Mammary epithelial cell (primary cell): ENCODE measurements at regions of chr12 and their contacts with region 1.

Region 1: GRCh38 chr12:6392504-6393077 is 8.6 kb downstream of the LTBR start:
- DNase-seq: no peak
- H3K4me3 ChIP-seq: no peak overlapping the region
- H3K27ac ChIP-seq: no peak overlapping the region
- H3K4me1 ChIP-seq: no peaks in the 10 kb centered on the region
- H3K27me3 ChIP-seq: no peaks in the 10 kb centered on the region
- CTCF ChIP-seq: no peak

Region 2: DNA sequence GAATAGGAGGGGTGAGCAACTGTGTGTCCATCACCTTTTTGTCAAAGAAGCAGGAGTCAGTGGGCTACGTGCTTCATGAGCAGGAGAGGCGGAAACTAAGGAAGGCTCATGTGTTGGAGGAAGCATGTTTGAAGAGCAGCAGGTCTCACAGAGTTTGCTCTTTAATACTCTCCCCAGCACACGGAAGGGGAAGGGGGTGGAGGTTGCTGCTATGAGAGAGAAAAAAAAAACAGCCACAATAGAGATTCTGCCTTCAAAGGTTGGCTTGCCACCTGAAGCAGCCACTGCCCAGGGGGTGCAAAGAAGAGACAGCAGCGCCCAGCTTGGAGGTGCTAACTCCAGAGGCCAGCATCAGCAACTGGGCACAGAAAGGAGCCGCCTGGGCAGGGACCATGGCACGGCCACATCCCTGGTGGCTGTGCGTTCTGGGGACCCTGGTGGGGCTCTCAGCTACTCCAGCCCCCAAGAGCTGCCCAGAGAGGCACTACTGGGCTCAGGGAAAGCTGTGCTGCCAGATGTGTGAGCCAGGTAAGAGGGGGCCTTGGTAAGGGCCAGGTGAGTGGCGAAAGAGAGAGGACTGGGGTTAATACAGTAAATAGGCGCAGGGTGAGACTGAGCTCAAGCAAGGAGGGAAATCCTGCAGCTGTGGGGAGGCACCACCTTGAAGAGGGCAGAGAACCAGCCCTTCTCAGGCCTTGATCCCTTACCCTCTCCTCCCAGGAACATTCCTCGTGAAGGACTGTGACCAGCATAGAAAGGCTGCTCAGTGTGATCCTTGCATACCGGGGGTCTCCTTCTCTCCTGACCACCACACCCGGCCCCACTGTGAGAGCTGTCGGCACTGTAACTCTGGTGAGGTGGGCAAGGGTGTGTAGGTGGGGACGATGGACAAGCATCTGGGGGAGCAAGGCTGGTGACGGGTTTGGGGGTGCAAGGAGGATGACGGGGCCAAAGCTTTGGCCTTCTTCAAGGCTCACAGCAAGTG is 52.4 kb after region 1 on chr12 and contains the start of gene CD27:
- CTCF ChIA-PET with region 1: no interaction called
- dilution Hi-C with region 1: loop called (anchors 5 kb)
- in situ Hi-C with region 1: no loop called
- intact Hi-C with region 1: no loop called
- DNase-seq: no peak
- H3K4me3 ChIP-seq: no peak within 1 kb of the TSS
- H3K27ac ChIP-seq: no peak within 1 kb of the TSS
- H3K4me1 ChIP-seq: no peaks in the 10 kb centered on the region
- H3K27me3 ChIP-seq: no peaks in the 10 kb centered on the region
- CTCF ChIP-seq: no peak
- total RNA-seq, gene CD27: not detected

Region 3: GRCh38 chr12:6461401-6462233 is 69.0 kb after region 1 on chr12:
- CTCF ChIA-PET with region 1: no interaction called
- dilution Hi-C with region 1: no loop called
- in situ Hi-C with region 1: no loop called
- intact Hi-C with region 1: no loop called
- DNase-seq: no peak
- H3K4me3 ChIP-seq: no peak overlapping the region
- H3K27ac ChIP-seq: no peak overlapping the region
- H3K4me1 ChIP-seq: no peaks in the 10 kb centered on the region
- H3K27me3 ChIP-seq: no peaks in the 10 kb centered on the region
- CTCF ChIP-seq: no peak